HCT116 (cell line): ENCODE measurements at regions of chr2 and their contacts with region 1.

Region 1: DNA sequence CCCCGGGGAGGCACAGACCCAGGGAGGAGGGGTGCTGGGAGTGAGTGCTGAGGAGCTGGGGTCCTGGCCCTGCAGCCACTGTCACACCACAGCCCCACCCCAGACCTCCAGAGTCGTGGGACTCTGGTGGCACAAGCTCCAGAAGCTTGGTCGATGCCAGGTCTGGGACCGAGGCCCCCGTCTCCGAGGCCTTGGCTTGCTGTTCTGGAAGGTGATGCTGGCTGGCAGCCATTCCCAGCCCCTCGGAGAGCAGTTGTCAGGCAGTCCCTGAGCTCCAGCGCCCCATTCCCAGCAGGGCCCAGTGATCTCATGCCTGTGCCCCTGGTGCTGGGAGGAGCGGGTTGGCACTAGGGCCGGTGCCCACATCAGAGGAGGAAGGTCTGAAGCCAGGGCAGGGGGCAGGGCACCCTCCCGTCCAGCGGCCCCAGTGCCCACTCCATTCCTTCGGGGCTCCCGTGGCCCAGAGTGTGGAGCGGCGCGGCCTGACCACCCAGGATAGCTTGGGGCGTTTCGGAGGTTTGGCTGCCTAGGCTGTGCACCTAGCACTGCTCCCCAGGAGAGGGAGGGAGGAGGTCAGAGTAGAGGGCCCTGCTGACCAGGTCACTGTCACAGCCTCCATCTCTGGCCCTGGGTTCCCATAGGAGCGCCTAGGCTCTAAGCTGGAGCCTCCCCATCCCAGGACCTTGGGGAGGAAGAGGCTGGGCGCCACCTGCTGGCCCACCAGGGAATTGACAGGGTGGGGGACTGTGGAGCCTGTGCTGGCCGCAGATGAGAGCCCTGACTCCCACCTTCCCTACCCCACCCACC is 16.8 kb upstream of the ALPI start:
- DNase-seq: no peak
- ATAC-seq: peak; percentile 80
- H3K4me3 ChIP-seq: no peak overlapping the region
- H3K27ac ChIP-seq: no peak overlapping the region
- H3K4me1 ChIP-seq: peaks cover 0 to 6% of the 10 kb centered on the region in 2 experiments; a peak in 2 of 4 replicates
- H3K27me3 ChIP-seq: no peaks in the 10 kb centered on the region
- CTCF ChIP-seq: peak in 2 of 3 experiments; percentile 33 to 46; a peak in 3 of 6 replicates
- POLR2A ChIP-seq: no peak
- RAD21 ChIP-seq: peak; percentile 59

Region 2: GRCh38 chr2:231800493-231801091 is 638.6 kb before region 1 on chr2:
- CTCF ChIA-PET with region 1: no interaction called
- POLR2A ChIA-PET with region 1: no interaction called
- RAD21 ChIA-PET with region 1: no interaction called
- intact Hi-C with region 1: loop called (anchors 2 kb)
- DNase-seq: peak; percentile 32
- ATAC-seq: peak; percentile 86
- H3K4me3 ChIP-seq: no peak overlapping the region
- H3K27ac ChIP-seq: no peak overlapping the region
- H3K4me1 ChIP-seq: peaks cover 0 to 1% of the 10 kb centered on the region in 2 experiments; a peak in 1 of 4 replicates
- H3K27me3 ChIP-seq: no peaks in the 10 kb centered on the region
- CTCF ChIP-seq: peak; percentile 41 to 86 (median 85); a peak in 5 of 6 replicates
- POLR2A ChIP-seq: no peak
- RAD21 ChIP-seq: peak; percentile 47

Region 3: GRCh38 chr2:231854671-231855070 is 584.5 kb before region 1 on chr2:
- CTCF ChIA-PET with region 1: interaction called, 4 read pairs
- POLR2A ChIA-PET with region 1: no interaction called
- RAD21 ChIA-PET with region 1: no interaction called
- intact Hi-C with region 1: loop called (anchors 1 kb)
- DNase-seq: no peak
- ATAC-seq: no peak
- H3K4me3 ChIP-seq: no peak overlapping the region
- H3K27ac ChIP-seq: no peak overlapping the region
- H3K4me1 ChIP-seq: no peaks in the 10 kb centered on the region
- H3K27me3 ChIP-seq: peaks cover 12% of the 10 kb centered on the region; the same call in 1 of the 2 replicates
- CTCF ChIP-seq: no peak
- POLR2A ChIP-seq: no peak
- RAD21 ChIP-seq: no peak

Region 4: GRCh38 chr2:232365621-232366321 is 73.4 kb before region 1 on chr2:
- CTCF ChIA-PET with region 1: interaction called, 8 read pairs
- POLR2A ChIA-PET with region 1: no interaction called
- RAD21 ChIA-PET with region 1: interaction called, 4 to 7 read pairs
- intact Hi-C with region 1: loop called (anchors 2 kb)
- DNase-seq: peak; percentile 29
- ATAC-seq: peak; percentile 94
- H3K4me3 ChIP-seq: no peak overlapping the region
- H3K27ac ChIP-seq: no peak overlapping the region
- H3K4me1 ChIP-seq: peaks cover 0 to 4% of the 10 kb centered on the region in 2 experiments; a peak in 1 of 4 replicates
- H3K27me3 ChIP-seq: no peaks in the 10 kb centered on the region
- CTCF ChIP-seq: peak; percentile 61 to 78 (median 62)
- POLR2A ChIP-seq: no peak
- RAD21 ChIP-seq: peak; percentile 68